ENCODE measurements at regions of chr10 and their contacts with region 1.

Region 1: DNA sequence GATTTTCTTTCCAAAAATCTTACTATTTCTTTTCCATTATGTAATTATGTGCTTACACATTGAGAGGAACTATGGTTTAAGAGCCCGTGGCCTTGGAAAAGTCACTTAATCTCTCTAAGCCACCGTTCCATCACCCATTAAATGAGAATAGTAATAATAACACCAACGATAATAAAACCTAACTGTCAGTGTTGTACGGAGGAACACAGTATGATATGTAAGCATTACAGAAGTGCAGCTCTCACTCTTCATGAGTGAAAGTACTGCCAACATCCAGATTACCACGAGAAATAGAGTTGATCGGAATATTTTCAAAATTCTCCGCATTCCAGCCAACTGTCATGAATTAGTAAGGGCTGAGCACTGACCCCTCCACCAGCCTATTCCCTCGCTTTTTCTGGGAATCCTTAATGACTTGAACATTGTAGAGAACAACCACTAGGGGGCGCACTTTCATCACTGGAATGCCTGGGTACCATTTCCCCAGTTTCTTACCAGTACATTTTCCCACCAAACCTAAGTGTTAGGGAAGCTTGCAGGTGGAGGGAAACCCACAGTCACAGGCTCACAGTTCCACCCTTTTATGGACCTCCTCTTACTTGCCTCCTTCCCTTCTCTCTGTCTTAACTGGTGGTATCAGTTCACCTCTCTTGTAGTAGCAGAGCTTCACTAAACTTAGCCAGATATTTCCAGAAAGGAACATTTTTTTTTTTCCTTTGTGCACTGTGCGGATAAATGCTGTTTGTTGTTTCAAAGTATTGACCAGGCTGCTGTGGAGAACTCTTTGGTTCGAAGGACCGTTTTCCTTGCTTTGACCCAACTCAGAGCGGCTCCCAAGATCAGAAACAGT is 27.8 kb downstream of the NKX2-3 start:
- DNase-seq: peak; percentile 41
- H3K4me3 ChIP-seq: no peak overlapping the region
- H3K27ac ChIP-seq: no peak overlapping the region
- H3K4me1 ChIP-seq: no peaks in the 10 kb centered on the region
- H3K27me3 ChIP-seq: peaks cover 3 to 19% of the 10 kb centered on the region in 2 experiments
- CTCF ChIP-seq: peak; percentile 62
- POLR2A ChIP-seq: no peak

Region 2: GRCh38 chr10:99395750-99396445 is 164.6 kb before region 1 on chr10:
- CTCF ChIA-PET with region 1: interaction called, 3 read pairs
- POLR2A ChIA-PET with region 1: no interaction called
- dilution Hi-C with region 1: no loop called
- intact Hi-C with region 1: loop called (anchors 2 kb)
- DNase-seq: peak; percentile 57
- H3K4me3 ChIP-seq: no peak overlapping the region
- H3K27ac ChIP-seq: peak overlapping the region; percentile 32
- H3K4me1 ChIP-seq: peaks cover 24% of the 10 kb centered on the region
- H3K27me3 ChIP-seq: no peaks in the 10 kb centered on the region
- CTCF ChIP-seq: no peak
- POLR2A ChIP-seq: no peak

Region 3: DNA sequence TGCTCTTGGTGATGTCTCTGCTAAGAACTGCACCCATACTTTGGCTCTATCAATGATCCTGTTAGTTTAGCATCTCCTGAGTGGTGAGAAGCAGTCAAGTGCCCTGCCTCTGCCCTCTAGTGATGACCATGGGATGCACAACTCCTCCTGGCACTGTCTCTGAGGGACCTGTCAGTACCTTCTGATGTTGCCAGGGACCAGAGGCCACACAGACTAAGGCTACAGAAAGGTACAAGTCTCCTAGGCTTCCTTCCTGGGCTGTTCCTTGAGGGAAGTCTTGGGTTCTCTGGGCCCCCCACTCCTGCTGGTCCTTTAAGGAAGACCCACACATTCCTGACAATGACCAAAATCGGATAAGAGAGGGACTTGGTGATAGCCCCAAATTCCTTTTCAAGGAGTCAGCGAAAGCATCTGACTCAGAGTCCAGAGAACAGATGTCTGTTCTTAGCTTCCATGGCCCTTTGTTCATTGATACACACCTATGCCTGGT is 12.4 kb before region 1 on chr10:
- CTCF ChIA-PET with region 1: interaction called, 25 read pairs
- POLR2A ChIA-PET with region 1: no interaction called
- dilution Hi-C with region 1: no loop called
- intact Hi-C with region 1: no loop called
- DNase-seq: peak; percentile 47
- H3K4me3 ChIP-seq: no peak overlapping the region
- H3K27ac ChIP-seq: no peak overlapping the region
- H3K4me1 ChIP-seq: no peaks in the 10 kb centered on the region
- H3K27me3 ChIP-seq: peaks cover 24 to 48% of the 10 kb centered on the region in 2 experiments
- CTCF ChIP-seq: peak in 1 of 2 donors; percentile 67
- POLR2A ChIP-seq: no peak

Region 4: GRCh38 chr10:99571812-99572211 is 11.3 kb after region 1 on chr10:
- CTCF ChIA-PET with region 1: interaction called, 10 read pairs
- POLR2A ChIA-PET with region 1: no interaction called
- dilution Hi-C with region 1: no loop called
- intact Hi-C with region 1: no loop called
- DNase-seq: no peak
- H3K4me3 ChIP-seq: no peak overlapping the region
- H3K27ac ChIP-seq: no peak overlapping the region
- H3K4me1 ChIP-seq: no peaks in the 10 kb centered on the region
- H3K27me3 ChIP-seq: peaks cover 0 to 8% of the 10 kb centered on the region in 2 experiments
- CTCF ChIP-seq: no peak
- POLR2A ChIP-seq: no peak

Region 5: GRCh38 chr10:99595770-99596465 is 35.4 kb after region 1 on chr10:
- CTCF ChIA-PET with region 1: interaction called, 13 read pairs
- POLR2A ChIA-PET with region 1: no interaction called
- dilution Hi-C with region 1: no loop called
- intact Hi-C with region 1: no loop called
- DNase-seq: no peak
- H3K4me3 ChIP-seq: no peak overlapping the region
- H3K27ac ChIP-seq: no peak overlapping the region
- H3K4me1 ChIP-seq: no peaks in the 10 kb centered on the region
- H3K27me3 ChIP-seq: peaks cover 2 to 9% of the 10 kb centered on the region in 2 experiments
- CTCF ChIP-seq: no peak
- POLR2A ChIP-seq: no peak

Region 6: GRCh38 chr10:99612167-99612831 is 51.8 kb after region 1 on chr10:
- CTCF ChIA-PET with region 1: interaction called, 32 read pairs
- POLR2A ChIA-PET with region 1: no interaction called
- dilution Hi-C with region 1: no loop called
- intact Hi-C with region 1: loop called (anchors 1 kb)
- DNase-seq: peak; percentile 71
- H3K4me3 ChIP-seq: no peak overlapping the region
- H3K27ac ChIP-seq: no peak overlapping the region
- H3K4me1 ChIP-seq: peaks cover 2% of the 10 kb centered on the region
- H3K27me3 ChIP-seq: no peaks in the 10 kb centered on the region
- CTCF ChIP-seq: peak; percentile 66 to 67
- POLR2A ChIP-seq: no peak

Region 7: DNA sequence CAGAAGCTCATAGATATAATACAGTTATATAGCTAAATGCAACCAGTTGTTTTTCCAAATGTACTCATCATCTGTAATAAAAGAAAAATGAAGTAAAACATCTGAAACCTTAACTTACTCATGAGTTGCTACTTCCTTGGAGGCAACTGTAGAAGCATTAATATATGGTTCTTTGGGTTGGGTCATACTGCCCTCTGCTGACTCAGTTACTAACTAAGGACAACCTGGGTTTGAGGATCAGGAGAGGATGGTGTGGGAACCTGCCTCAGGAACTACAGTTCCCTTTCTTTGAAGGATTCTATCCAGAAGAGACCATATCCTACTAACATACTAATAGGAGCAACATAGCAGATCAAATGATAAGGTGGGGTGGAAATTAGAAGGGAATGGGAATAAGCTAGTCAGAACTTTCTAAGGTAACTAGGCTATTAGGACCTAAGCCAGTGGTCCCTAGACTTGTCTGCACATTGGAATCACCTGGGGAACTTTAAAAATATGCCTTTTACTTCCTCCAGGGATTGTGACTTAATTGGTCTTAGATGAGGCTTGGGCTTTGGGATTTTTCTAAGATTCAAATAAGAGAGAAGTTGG is 150.7 kb after region 1 on chr10:
- CTCF ChIA-PET with region 1: interaction called, 3 read pairs
- POLR2A ChIA-PET with region 1: no interaction called
- dilution Hi-C with region 1: no loop called
- intact Hi-C with region 1: loop called (anchors 1 kb)
- DNase-seq: peak; percentile 67
- H3K4me3 ChIP-seq: no peak overlapping the region
- H3K27ac ChIP-seq: no peak overlapping the region
- H3K4me1 ChIP-seq: no peaks in the 10 kb centered on the region
- H3K27me3 ChIP-seq: no peaks in the 10 kb centered on the region
- CTCF ChIP-seq: peak; percentile 36 to 46
- POLR2A ChIP-seq: no peak